ENCODE measurements at regions of chr1 and their contacts with region 1.

Region 1: DNA sequence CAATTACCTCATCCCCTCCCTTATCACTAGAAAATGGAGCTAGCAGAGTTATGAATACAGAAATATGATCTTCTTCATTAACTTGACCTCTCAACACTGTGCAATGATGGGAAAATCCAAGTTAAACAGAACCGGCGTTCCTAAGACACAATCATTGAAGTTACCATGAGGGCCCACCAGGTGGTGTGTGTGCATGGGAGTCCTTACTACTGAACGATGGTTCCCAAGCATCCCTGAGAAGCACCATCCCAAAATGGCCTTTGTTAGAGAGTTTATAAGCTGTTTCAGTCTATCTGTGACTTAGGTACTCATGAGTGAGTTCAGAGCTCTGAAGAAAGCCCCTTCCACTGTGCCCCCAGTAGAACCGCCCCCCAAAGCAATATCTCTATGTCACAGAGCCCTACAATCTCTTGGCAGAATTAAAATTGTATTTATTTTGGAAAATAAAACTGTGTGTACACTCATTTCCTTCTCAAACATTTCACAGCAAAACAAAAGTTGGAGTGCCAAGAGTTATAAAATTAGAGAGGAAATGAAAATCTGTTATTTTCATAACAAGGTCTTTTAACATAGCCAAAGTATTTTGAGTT is 56.8 kb downstream of the PLD5 start:
- DNase-seq: peak; percentile 57 to 75
- ATAC-seq: peak; percentile 72 to 94; a peak in 4 of 6 replicates
- H3K4me3 ChIP-seq: no peak overlapping the region
- H3K27ac ChIP-seq: no peak overlapping the region
- H3K4me1 ChIP-seq: peaks cover 21% of the 10 kb centered on the region
- CTCF ChIP-seq: peak; percentile 72
- EP300 ChIP-seq: no peak
- POLR2A ChIP-seq: no peak
- RAD21 ChIP-seq: peak; percentile 76

Region 2: GRCh38 chr1:242454262-242455045 is 13.2 kb before region 1 on chr1:
- CTCF ChIA-PET with region 1: interaction called, 27 read pairs
- POLR2A ChIA-PET with region 1: no interaction called
- DNase-seq: peak; percentile 54 to 63
- ATAC-seq: peak; percentile 85 to 94; a peak in 5 of 6 replicates
- H3K4me3 ChIP-seq: no peak overlapping the region
- H3K27ac ChIP-seq: peak overlapping the region; percentile 13 to 53; a peak in 3 of 6 replicates
- H3K4me1 ChIP-seq: no peaks in the 10 kb centered on the region; the same call in 2 of the 3 replicates
- CTCF ChIP-seq: peak; percentile 86
- EP300 ChIP-seq: no peak
- POLR2A ChIP-seq: no peak
- RAD21 ChIP-seq: peak; percentile 82 to 84

Region 3: DNA sequence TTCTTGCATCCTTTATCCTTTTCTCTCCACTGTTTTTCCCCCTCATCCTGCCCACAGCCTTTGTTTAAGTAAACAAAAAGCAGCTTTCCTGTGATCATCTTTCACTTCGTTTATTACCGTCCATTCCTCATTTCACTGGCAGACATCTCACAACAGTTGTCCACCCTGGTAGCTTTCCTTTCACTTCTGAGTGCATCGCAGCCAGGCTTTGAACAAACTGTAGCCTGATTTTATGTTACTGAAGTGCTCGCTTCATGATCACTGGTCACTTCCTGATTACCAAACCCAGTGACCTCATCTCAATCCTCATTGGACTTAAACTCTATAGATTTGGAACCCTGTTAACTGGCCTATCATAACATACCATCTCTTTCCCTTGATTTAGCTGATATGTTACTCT is 855.8 kb after region 1 on chr1:
- CTCF ChIA-PET with region 1: interaction called, 13 read pairs
- POLR2A ChIA-PET with region 1: no interaction called
- DNase-seq: no peak
- ATAC-seq: no peak
- H3K4me3 ChIP-seq: no peak overlapping the region
- H3K27ac ChIP-seq: no peak overlapping the region
- H3K4me1 ChIP-seq: no peaks in the 10 kb centered on the region
- CTCF ChIP-seq: no peak
- EP300 ChIP-seq: no peak
- POLR2A ChIP-seq: no peak
- RAD21 ChIP-seq: no peak